ENCODE measurements at regions of chr22 and their contacts with region 1.

Region 1: DNA sequence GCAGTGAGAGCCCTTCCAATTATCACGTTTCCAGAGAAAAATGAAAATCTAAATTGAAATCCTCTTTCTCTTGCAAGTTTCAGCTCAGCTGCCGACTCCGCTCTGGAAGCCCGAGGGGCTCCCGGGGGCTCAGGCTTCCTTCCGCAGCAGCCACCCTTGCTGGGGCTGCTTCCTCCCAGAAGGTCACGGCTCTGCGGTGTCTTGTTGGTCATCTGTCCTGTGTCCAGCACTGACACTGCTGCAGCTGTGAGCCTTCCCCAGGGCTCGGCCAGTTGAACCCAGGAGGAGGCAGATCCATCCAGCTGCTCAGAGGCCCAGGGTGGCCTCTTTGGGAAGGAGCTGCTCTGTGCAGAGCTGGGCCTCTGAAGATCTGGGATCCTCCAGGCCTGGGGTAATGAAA is 1337.2 kb downstream of the TBC1D22A start:
- DNase-seq: no peak
- H3K4me3 ChIP-seq: no peak overlapping the region
- H3K27ac ChIP-seq: no peak overlapping the region
- H3K4me1 ChIP-seq: no peaks in the 10 kb centered on the region
- H3K27me3 ChIP-seq: peaks cover 96% of the 10 kb centered on the region
- CTCF ChIP-seq: no peak

Region 2: GRCh38 chr22:47943729-47944700 is 155.7 kb before region 1 on chr22:
- CTCF ChIA-PET with region 1: no interaction called
- POLR2A ChIA-PET with region 1: no interaction called
- intact Hi-C with region 1: no loop called
- DNase-seq: no peak
- H3K4me3 ChIP-seq: no peak overlapping the region
- H3K27ac ChIP-seq: no peak overlapping the region
- H3K4me1 ChIP-seq: no peaks in the 10 kb centered on the region
- H3K27me3 ChIP-seq: peaks cover 81% of the 10 kb centered on the region
- CTCF ChIP-seq: no peak

Region 3: GRCh38 chr22:48118654-48119053 is 19.0 kb after region 1 on chr22:
- CTCF ChIA-PET with region 1: no interaction called
- POLR2A ChIA-PET with region 1: no interaction called
- intact Hi-C with region 1: loop called (anchors 1 kb)
- DNase-seq: no peak
- H3K4me3 ChIP-seq: no peak overlapping the region
- H3K27ac ChIP-seq: no peak overlapping the region
- H3K4me1 ChIP-seq: no peaks in the 10 kb centered on the region
- H3K27me3 ChIP-seq: peaks cover 61% of the 10 kb centered on the region
- CTCF ChIP-seq: no peak